ENCODE measurements at regions of chr5 and their contacts with region 1.

Region 1: GRCh38 chr5:142324871-142325724 is at the start of gene SPRY4:
- DNase-seq: peak; percentile 97 to 98
- H3K4me3 ChIP-seq: peak within 1 kb of the TSS; percentile 83
- H3K4me3 Mint-ChIP-seq: peak within 1 kb of the TSS; percentile 89
- H3K27ac Mint-ChIP-seq: peak within 1 kb of the TSS; percentile 86
- H3K4me1 ChIP-seq: peaks cover 39% of the 10 kb centered on the region
- H3K4me1 Mint-ChIP-seq: peaks cover 41% of the 10 kb centered on the region
- H3K27me3 ChIP-seq: no peaks in the 10 kb centered on the region
- H3K27me3 Mint-ChIP-seq: no peaks in the 10 kb centered on the region
- CTCF ChIP-seq: peak in 1 of 2 experiments; percentile 17
- total RNA-seq, gene SPRY4: 7.7 and 8.3 TPM in 2 replicates

Region 2: DNA sequence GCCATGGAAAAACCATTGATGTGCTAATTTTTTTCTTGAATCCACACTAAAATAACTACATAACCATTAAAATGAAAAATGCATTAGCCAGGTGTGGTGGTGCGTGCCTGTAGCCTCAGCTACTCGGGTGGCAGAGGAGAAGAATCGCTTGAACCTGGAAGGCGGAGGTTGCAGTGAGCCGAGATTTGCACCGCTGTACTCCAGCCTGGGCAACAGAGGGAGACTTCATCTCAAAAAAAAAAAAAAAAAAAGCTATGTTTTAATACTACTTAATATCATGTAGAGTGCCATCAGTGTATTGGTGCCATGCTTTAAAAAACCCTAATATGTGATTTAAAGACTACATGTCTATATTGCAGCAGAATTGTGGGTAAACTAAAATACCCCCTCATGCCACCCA is 157.6 kb before region 1 on chr5:
- CTCF ChIA-PET with region 1: no interaction called
- POLR2A ChIA-PET with region 1: no interaction called
- intact Hi-C with region 1: loop called (anchors 5 kb)
- DNase-seq: no peak
- H3K4me3 ChIP-seq: no peak overlapping the region
- H3K4me3 Mint-ChIP-seq: no peak overlapping the region
- H3K27ac Mint-ChIP-seq: no peak overlapping the region
- H3K4me1 ChIP-seq: peaks cover 32% of the 10 kb centered on the region
- H3K4me1 Mint-ChIP-seq: peaks cover 45% of the 10 kb centered on the region
- H3K27me3 ChIP-seq: no peaks in the 10 kb centered on the region
- H3K27me3 Mint-ChIP-seq: no peaks in the 10 kb centered on the region
- CTCF ChIP-seq: no peak

Region 3: GRCh38 chr5:142306077-142306502 is 19.0 kb before region 1 on chr5:
- CTCF ChIA-PET with region 1: no interaction called
- POLR2A ChIA-PET with region 1: interaction called, 9 read pairs
- intact Hi-C with region 1: loop called (anchors 1 kb)
- DNase-seq: peak; percentile 57 to 80
- H3K4me3 ChIP-seq: no peak overlapping the region
- H3K4me3 Mint-ChIP-seq: no peak overlapping the region
- H3K27ac Mint-ChIP-seq: peak overlapping the region; percentile 43
- H3K4me1 ChIP-seq: peaks cover 25% of the 10 kb centered on the region
- H3K4me1 Mint-ChIP-seq: peaks cover 26% of the 10 kb centered on the region
- H3K27me3 ChIP-seq: no peaks in the 10 kb centered on the region
- H3K27me3 Mint-ChIP-seq: no peaks in the 10 kb centered on the region
- CTCF ChIP-seq: no peak

Region 4: DNA sequence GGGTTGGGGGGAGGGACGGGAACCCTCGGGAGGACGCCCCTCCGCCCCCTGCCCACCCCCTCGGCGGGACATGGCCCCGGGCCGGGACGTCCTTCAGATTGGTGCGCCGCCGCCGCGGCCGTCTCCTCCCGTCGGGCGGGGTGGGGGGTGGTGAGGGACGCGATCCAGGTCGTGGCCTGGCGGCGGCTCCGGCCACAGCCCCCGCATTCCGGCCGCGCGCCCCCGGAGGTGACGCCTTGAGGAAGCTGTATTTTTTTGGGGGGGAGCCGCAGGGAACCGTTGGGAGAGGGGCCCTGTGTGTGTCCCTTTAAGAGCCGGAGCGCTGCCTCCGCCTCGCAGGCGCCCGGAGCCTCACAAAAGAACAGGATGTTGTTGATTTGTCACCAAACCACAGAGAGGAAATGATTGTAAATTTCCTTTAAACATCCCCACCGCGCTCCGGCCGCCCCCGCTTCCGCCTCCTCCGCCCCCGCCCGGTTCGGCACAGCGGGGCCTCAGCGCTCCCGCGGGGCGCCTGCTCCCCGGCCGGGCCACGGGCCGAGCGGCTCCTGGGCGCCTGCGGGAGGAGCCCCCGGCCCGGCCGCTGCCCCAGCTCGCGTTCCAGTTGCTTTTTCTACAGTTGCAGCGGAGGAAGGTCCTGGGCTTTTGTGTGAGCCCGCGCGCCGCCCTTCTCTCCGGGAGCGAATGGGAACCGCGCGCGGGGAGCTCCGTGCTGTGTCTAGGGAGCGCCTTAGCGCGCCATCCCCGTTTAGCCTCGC is 31.8 kb after region 1 on chr5:
- CTCF ChIA-PET with region 1: interaction called, 3 read pairs
- POLR2A ChIA-PET with region 1: no interaction called
- intact Hi-C with region 1: loop called (anchors 2 kb)
- DNase-seq: peak; percentile 71 to 73
- H3K4me3 ChIP-seq: peak overlapping the region; percentile 76
- H3K4me3 Mint-ChIP-seq: peak overlapping the region; percentile 71
- H3K27ac Mint-ChIP-seq: peak overlapping the region; percentile 32
- H3K4me1 ChIP-seq: peaks cover 28% of the 10 kb centered on the region
- H3K4me1 Mint-ChIP-seq: peaks cover 15% of the 10 kb centered on the region
- H3K27me3 ChIP-seq: no peaks in the 10 kb centered on the region
- H3K27me3 Mint-ChIP-seq: no peaks in the 10 kb centered on the region
- CTCF ChIP-seq: no peak

Region 5: DNA sequence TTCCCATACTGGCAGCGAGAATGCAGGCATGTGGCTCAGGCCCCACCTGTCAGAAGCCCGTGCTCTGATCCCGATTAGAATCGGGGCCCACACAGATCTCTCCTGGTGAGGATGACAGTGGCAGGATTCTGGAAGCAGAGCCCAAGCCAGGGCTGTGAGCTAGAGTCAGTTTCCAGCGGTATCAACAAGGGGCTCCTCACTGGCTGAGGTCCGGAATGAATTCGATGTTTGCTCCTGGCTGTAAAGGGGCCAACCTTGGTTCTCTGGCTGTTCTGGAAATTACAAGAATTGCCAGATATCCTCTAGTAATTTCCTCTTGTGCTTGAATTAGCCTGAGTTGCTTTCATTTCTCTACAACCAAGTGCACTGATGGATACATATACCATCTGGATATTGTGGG is 128.8 kb after region 1 on chr5:
- CTCF ChIA-PET with region 1: no interaction called
- POLR2A ChIA-PET with region 1: no interaction called
- intact Hi-C with region 1: no loop called
- DNase-seq: no peak
- H3K4me3 ChIP-seq: no peak overlapping the region
- H3K4me3 Mint-ChIP-seq: no peak overlapping the region
- H3K27ac Mint-ChIP-seq: no peak overlapping the region
- H3K4me1 ChIP-seq: no peaks in the 10 kb centered on the region
- H3K4me1 Mint-ChIP-seq: peaks cover 7% of the 10 kb centered on the region
- H3K27me3 ChIP-seq: no peaks in the 10 kb centered on the region
- H3K27me3 Mint-ChIP-seq: peaks cover 2% of the 10 kb centered on the region
- CTCF ChIP-seq: no peak